ENCODE measurements at regions of chr2 and their contacts with region 1.

Region 1: GRCh38 chr2:70779911-70780545 is 10.4 kb downstream of the FIGLA start:
- DNase-seq: no peak
- ATAC-seq: no peak
- H3K4me3 Mint-ChIP-seq: no peak overlapping the region
- H3K27ac Mint-ChIP-seq: no peak overlapping the region
- H3K4me1 Mint-ChIP-seq: peaks cover under 1% of the 10 kb centered on the region
- H3K27me3 Mint-ChIP-seq: peaks cover 14% of the 10 kb centered on the region

Region 2: DNA sequence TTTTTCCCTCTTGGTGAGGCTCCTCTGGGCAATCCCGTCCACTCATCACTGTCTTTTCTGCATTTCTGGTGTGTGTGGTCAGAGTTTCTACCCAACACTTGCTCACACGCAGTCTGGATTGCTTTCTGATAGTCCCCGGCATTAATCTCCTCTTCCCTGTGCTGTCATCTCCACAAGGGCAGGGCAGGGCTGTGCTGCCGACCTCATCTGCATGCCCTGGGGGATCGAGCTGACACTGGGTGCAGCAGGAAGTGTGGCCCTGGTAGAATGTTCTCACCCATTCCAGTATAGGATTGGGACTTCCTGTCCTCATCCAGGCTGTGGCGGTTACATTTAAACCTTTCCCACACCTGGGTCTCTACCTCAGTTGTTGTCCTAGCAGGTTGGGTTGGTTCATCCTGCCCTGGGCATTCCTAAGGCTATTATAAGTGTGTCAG is 398.2 kb before region 1 on chr2:
- CTCF ChIA-PET with region 1: no interaction called
- POLR2A ChIA-PET with region 1: no interaction called
- intact Hi-C with region 1: no loop called
- DNase-seq: no peak
- ATAC-seq: no peak
- H3K4me3 Mint-ChIP-seq: no peak overlapping the region
- H3K27ac Mint-ChIP-seq: no peak overlapping the region
- H3K4me1 Mint-ChIP-seq: peaks cover 4% of the 10 kb centered on the region
- H3K27me3 Mint-ChIP-seq: no peaks in the 10 kb centered on the region

Region 3: GRCh38 chr2:70756128-70756527 is 23.9 kb before region 1 on chr2:
- CTCF ChIA-PET with region 1: interaction called, 3 read pairs
- POLR2A ChIA-PET with region 1: no interaction called
- intact Hi-C with region 1: loop called in 1 of 2 experiments (anchors 2 kb)
- DNase-seq: no peak
- ATAC-seq: no peak
- H3K4me3 Mint-ChIP-seq: no peak overlapping the region
- H3K27ac Mint-ChIP-seq: no peak overlapping the region
- H3K4me1 Mint-ChIP-seq: no peaks in the 10 kb centered on the region
- H3K27me3 Mint-ChIP-seq: peaks cover 3% of the 10 kb centered on the region

Region 4: GRCh38 chr2:70887550-70888246 is 107.7 kb after region 1 on chr2:
- CTCF ChIA-PET with region 1: no interaction called
- POLR2A ChIA-PET with region 1: no interaction called
- intact Hi-C with region 1: no loop called
- DNase-seq: peak; percentile 71
- ATAC-seq: peak; percentile 65
- H3K4me3 Mint-ChIP-seq: peak overlapping the region; percentile 62
- H3K27ac Mint-ChIP-seq: no peak overlapping the region
- H3K4me1 Mint-ChIP-seq: peaks cover 31% of the 10 kb centered on the region
- H3K27me3 Mint-ChIP-seq: peaks cover 75% of the 10 kb centered on the region